Breast epithelium (tissue), 4 donors: ENCODE measurements at regions of chr11 and their contacts with region 1.

Region 1: GRCh38 chr11:103779054-103779453 is 257.4 kb upstream of the DDI1 start:
- DNase-seq: no peak
- H3K4me3 ChIP-seq: no peak overlapping the region
- H3K27ac ChIP-seq: no peak overlapping the region
- H3K4me1 ChIP-seq: no peaks in the 10 kb centered on the region
- H3K27me3 ChIP-seq: no peaks in the 10 kb centered on the region
- CTCF ChIP-seq: no peak
- POLR2A ChIP-seq: no peak

Region 2: DNA sequence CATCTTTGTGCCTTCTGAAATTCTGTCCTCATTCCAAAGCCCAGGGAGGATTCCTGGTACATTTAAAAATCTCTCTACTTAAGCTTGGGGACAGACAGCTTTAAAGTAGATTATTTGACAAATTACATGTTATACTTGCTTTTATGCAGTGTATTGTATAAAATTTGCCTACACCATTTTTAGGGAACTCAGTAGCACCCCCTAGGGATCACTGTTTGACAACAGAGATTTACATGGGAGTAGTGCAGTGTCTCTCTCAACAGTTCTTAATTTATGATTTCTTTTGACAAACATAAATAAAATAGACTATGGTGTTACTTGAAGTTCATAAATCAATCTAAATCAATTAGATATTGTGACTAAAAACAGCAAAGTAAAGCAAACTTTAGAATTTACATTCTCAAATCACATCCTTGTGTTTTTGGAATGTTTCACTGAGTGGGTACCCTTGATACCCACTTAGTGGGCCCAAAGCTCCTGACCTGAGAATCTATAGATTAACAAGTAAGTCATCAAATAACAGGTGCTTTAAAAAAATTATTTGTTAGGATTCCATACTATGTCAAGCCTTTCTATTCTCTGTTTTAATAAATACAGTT is 241.1 kb before region 1 on chr11:
- intact Hi-C with region 1: no loop called
- DNase-seq: no peak
- H3K4me3 ChIP-seq: no peak overlapping the region
- H3K27ac ChIP-seq: no peak overlapping the region
- H3K4me1 ChIP-seq: no peaks in the 10 kb centered on the region
- H3K27me3 ChIP-seq: no peaks in the 10 kb centered on the region
- CTCF ChIP-seq: no peak
- POLR2A ChIP-seq: no peak

Region 3: DNA sequence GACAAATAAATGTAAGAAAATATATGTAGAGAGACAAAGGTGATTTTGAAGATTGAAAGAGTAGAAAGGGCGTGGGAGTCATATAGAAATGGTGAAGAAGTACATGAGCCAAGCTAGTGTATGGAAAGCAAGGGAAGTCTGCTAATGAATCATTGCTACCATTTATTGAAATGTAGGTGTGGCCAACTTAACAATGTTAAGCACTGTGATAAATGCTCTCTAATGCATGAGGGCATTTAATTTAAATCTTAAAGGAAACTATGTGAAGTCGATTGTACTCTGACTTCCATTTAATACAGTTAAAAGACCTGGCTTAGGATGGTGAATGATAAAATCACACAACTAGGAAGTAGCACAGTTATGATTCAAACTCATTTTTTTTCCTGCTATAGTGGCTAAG is 899.4 kb after region 1 on chr11:
- intact Hi-C with region 1: loop called (anchors 5 kb)
- DNase-seq: no peak
- H3K4me3 ChIP-seq: no peak overlapping the region
- H3K27ac ChIP-seq: no peak overlapping the region
- H3K4me1 ChIP-seq: no peaks in the 10 kb centered on the region
- H3K27me3 ChIP-seq: no peaks in the 10 kb centered on the region
- CTCF ChIP-seq: no peak
- POLR2A ChIP-seq: no peak